ENCODE measurements at regions of chr7 and their contacts with region 1.

Region 1: DNA sequence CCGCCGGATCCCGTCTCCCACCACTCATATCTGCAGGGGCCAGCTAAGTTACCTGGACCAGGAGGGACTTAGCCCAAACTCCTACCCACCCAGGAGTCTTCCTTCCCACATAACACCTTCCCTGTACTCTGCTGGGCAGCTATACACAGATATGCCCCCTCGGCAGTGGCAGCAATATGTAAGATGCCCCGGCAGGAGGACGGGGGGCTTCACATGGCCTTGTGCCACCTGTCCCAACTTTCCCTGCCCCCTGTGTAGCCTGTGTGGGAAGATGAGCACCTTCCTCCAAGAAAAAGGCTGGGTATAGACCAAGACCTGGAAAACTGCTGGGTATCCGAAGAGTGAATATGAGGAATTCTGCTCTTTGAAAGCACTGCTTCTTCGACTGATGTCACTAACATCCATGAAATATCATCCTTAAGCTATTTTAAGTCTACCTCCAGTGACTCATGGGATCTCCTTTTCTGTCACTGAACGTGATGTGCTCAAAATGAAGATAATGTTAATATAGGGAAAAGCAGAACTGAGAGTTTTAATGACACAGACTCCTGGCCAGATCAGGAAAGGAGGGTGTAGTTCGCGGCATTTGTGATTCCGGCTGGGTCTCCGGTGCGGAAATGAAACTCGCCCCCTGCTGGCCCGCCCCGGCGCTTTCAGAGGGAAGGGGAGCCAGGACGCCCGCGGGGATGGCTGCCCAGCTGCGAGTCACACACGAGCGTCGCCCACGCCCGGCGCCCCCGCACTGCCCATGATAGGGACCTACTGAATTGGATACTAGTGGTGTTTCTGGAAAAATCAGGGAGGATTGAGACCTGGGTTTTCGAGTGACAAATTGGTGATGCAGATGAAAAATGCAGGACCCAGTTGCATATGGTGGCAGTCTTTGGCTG is 256.9 kb upstream of the NFE2L3 start:
- DNase-seq: peak; percentile 79 to 87
- H3K4me3 ChIP-seq: peak overlapping the region; percentile 18 to 32 (median 24)
- H3K27ac ChIP-seq: peak overlapping the region in 2 of 5 donors; percentile 14 to 41
- H3K4me1 ChIP-seq: peaks cover 4 to 27% (median 18%) of the 10 kb centered on the region in 4 donors
- H3K27me3 ChIP-seq: peaks cover 0 to 28% (median 0%) of the 10 kb centered on the region in 3 donors
- CTCF ChIP-seq: peak in 4 of 7 experiments; percentile 68 to 84 (median 76)
- EP300 ChIP-seq: no peak
- POLR2A ChIP-seq: no peak

Region 2: DNA sequence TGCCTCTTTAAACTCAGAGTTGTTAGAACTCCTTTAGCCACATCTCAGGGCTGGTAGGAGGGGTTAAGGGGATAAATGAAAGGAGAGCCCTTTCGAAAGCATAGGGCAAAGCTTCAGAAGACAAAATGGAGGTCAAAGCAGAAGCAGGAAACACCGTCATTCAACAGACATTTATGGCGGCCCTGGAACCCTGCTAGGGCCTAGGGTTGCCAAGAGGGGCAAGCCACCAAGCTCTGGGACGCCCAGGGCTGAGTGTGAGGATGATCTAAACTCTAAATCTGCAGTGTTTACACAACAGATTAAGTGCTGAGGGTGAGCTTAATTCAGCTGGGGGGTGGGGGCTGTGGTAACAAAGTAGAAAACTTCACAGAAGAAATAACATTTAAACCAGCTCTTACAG is 177.9 kb after region 1 on chr7:
- intact Hi-C with region 1: no loop called
- DNase-seq: no peak
- H3K4me3 ChIP-seq: no peak overlapping the region
- H3K27ac ChIP-seq: no peak overlapping the region
- H3K4me1 ChIP-seq: no peaks in the 10 kb centered on the region
- H3K27me3 ChIP-seq: peaks cover 0 to 40% (median 6%) of the 10 kb centered on the region in 3 donors
- CTCF ChIP-seq: no peak
- EP300 ChIP-seq: no peak
- POLR2A ChIP-seq: no peak

Region 3: DNA sequence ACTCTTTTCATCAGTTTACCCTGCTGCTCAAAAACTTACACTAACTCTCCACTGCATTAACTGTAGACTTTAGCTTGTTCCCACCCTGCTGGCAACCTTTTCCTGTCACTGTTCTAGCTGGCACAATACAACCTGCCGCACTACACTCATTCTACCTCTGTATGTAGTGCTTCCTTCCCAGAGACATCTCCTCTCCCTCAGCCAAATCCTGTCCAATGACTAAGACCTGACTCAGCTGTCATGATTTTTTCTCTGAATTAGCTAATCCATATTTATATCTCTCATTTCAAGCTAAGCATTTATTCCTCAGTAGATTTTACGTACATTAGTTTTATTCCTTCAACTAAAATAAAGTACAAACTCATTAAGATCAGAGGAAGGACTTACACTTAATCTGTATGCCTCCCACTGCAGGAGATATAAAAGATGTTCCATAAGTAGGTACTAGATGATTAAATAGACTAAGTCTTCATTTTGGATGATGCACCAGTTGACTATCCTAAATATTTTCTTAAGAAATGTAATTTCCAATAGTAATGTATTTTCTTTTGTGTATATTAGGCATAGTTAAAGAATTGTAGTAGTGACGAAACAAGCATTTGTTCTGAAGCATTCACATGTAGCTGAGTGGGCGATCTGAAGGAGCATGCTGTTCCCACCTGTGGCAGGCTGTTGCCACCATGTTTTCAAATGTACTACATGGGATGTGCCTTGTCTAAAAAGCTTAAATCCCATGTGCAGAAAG is 780.2 kb after region 1 on chr7:
- intact Hi-C with region 1: loop called (anchors 10 kb)
- DNase-seq: no peak
- H3K4me3 ChIP-seq: no peak overlapping the region
- H3K27ac ChIP-seq: no peak overlapping the region
- H3K4me1 ChIP-seq: no peaks in the 10 kb centered on the region
- H3K27me3 ChIP-seq: no peaks in the 10 kb centered on the region
- CTCF ChIP-seq: no peak
- EP300 ChIP-seq: no peak
- POLR2A ChIP-seq: no peak

Measured in stomach (tissue), 19 donors.